Tibial artery (tissue), 4 donors: ENCODE measurements at regions of chr13 and their contacts with region 1.

Region 1: GRCh38 chr13:36549755-36550154 is 117.5 kb downstream of the CCNA1 start:
- DNase-seq: no peak
- H3K4me3 ChIP-seq: no peak overlapping the region
- H3K27ac ChIP-seq: no peak overlapping the region
- H3K4me1 ChIP-seq: peaks cover 0 to 4% (median 2%) of the 10 kb centered on the region in 4 donors
- H3K27me3 ChIP-seq: no peaks in the 10 kb centered on the region
- CTCF ChIP-seq: no peak

Region 2: GRCh38 chr13:34959489-34959888 is 1590.3 kb before region 1 on chr13:
- intact Hi-C with region 1: loop called (anchors 5 kb)
- DNase-seq: no peak
- H3K4me3 ChIP-seq: no peak overlapping the region
- H3K27ac ChIP-seq: no peak overlapping the region
- H3K4me1 ChIP-seq: no peaks in the 10 kb centered on the region
- H3K27me3 ChIP-seq: no peaks in the 10 kb centered on the region
- CTCF ChIP-seq: no peak